Esophagus muscularis mucosa (tissue), 4 donors: ENCODE measurements at regions of chr6 and their contacts with region 1.

Region 1: DNA sequence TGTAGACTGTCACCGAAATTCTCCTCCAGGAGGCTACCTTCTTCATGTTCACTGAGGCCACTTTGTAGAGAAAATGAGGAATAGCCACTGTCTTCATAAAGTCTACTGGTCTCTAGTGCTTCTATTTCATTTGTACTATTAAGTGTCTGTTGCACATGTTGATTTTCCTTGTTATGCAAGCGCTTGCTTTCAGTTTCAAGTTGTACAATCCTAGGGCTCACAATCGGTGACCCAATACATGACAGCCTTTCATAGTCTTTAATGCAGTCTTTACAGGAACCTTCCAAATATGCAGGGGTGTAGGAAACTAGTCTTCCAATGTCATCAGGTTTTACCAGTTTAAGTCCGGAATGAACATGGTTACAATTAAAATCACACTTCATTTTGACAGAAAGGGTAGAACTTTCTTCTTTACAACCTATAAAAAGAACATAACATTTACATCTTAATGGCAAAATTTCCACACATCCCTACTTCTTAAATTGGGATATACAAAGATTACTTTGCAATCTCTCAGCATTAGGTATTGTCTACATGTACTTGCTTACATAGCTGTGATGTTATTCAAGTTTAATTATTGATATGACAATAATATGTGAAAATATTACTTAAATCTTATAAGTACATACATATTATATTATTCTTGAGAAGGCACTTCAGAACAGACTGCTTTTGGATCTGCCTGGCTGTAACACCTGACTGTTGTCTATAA is 7.5 kb downstream of the FBXO5 start:
- DNase-seq: no peak
- H3K4me3 ChIP-seq: no peak overlapping the region
- H3K27ac ChIP-seq: no peak overlapping the region
- H3K4me1 ChIP-seq: no peaks in the 10 kb centered on the region
- H3K27me3 ChIP-seq: no peaks in the 10 kb centered on the region
- CTCF ChIP-seq: no peak
- EP300 ChIP-seq: no peak
- POLR2A ChIP-seq: no peak

Region 2: GRCh38 chr6:152943260-152943896 is 32.0 kb before region 1 on chr6:
- intact Hi-C with region 1: no loop called
- DNase-seq: no peak
- H3K4me3 ChIP-seq: no peak overlapping the region
- H3K27ac ChIP-seq: no peak overlapping the region
- H3K4me1 ChIP-seq: peaks cover 5 to 6% (median 5%) of the 10 kb centered on the region in 4 donors
- H3K27me3 ChIP-seq: peaks cover 0 to 6% (median 0%) of the 10 kb centered on the region in 4 donors
- CTCF ChIP-seq: no peak
- EP300 ChIP-seq: no peak
- POLR2A ChIP-seq: no peak

Region 3: GRCh38 chr6:153023977-153024708 is 48.8 kb after region 1 on chr6:
- intact Hi-C with region 1: loop called (anchors 10 kb)
- DNase-seq: no peak
- H3K4me3 ChIP-seq: no peak overlapping the region
- H3K27ac ChIP-seq: no peak overlapping the region
- H3K4me1 ChIP-seq: no peaks in the 10 kb centered on the region
- H3K27me3 ChIP-seq: no peaks in the 10 kb centered on the region
- CTCF ChIP-seq: peak; percentile 71 to 82 (median 77)
- EP300 ChIP-seq: no peak
- POLR2A ChIP-seq: no peak

Region 4: GRCh38 chr6:153275997-153276396 is 300.6 kb after region 1 on chr6:
- intact Hi-C with region 1: no loop called
- DNase-seq: no peak
- H3K4me3 ChIP-seq: no peak overlapping the region
- H3K27ac ChIP-seq: no peak overlapping the region
- H3K4me1 ChIP-seq: no peaks in the 10 kb centered on the region
- H3K27me3 ChIP-seq: no peaks in the 10 kb centered on the region
- CTCF ChIP-seq: no peak
- EP300 ChIP-seq: no peak
- POLR2A ChIP-seq: no peak